ENCODE measurements at regions of chr4 and their contacts with region 1.

Region 1: DNA sequence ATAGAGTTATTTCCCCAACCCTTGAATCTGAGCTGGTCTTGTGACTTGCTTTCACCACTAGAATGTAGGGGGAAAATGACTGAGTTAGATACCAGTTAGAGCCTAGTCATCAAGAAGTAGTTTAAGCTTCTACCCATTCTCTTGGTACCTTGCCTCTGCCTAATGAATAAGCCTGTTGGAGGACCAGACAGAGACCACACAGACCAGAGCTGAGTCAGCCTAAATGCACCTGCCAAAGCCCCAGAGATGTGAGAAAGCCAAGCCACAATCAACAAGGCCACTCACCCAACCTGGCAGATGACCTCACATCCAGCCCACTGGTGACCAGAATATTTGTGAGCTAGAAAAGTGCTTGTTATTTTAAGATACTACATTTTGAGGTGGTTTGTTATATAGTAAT is 85.2 kb upstream of the DCLK2 start:
- DNase-seq: no peak
- H3K4me3 ChIP-seq: no peak overlapping the region
- H3K27ac ChIP-seq: no peak overlapping the region
- H3K27me3 ChIP-seq: no peaks in the 10 kb centered on the region
- CTCF ChIP-seq: no peak

Region 2: DNA sequence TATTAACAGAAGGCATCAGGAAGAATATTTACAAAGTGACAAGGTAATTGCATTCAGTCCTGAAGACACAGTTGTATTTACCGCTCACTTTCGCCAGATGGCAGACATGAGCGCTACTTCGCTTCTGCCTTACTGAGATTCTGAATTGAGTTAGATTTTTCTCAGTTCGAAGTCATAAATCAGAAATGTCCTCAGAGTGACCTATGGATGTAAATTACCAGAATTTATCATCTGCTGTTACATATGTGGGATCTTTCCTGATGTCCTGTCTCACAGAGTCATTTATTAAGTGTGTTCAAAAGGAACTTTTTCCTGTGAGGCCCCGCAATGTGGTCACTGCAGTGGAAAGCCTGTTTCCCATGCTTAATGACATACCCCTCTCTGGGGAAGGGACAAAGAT is 12.1 kb before region 1 on chr4:
- CTCF ChIA-PET with region 1: interaction called, 21 read pairs
- POLR2A ChIA-PET with region 1: no interaction called
- DNase-seq: no peak
- H3K4me3 ChIP-seq: no peak overlapping the region
- H3K27ac ChIP-seq: no peak overlapping the region
- H3K27me3 ChIP-seq: no peaks in the 10 kb centered on the region
- CTCF ChIP-seq: peak; percentile 87

Region 3: DNA sequence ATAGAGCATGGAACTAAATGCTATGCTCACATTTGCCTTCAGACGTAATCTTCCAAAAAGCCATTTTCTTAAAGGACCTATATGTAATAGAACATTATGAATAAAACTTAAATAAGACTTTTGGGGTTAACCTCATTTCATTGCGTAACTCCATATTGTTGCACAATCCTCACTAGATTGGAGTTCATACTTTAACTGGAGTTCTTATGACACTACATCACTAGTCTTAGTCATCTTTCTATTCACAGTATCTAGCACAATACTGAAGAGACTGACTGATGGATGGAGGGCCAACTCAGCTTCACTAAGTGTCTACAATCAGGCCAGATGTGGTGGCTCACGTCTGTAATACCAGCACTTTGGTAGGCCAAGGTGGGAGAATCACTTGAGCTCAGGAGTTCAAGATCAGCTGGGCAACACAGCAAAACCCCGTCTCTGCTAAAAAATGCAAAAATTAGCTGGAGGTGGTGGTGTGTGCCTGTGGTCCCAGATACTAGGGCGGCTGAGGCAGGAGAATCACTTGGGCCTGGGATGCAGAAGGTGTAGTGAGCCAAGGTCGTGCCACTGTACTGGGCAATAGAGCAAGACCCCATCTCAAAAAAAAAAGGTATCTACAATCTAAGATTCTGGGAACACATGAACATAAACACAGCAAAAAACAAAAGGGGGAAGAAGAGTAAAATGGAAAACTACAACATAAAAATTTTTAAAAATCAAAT is 508.1 kb after region 1 on chr4:
- CTCF ChIA-PET with region 1: no interaction called
- POLR2A ChIA-PET with region 1: no interaction called
- DNase-seq: peak; percentile 39
- H3K4me3 ChIP-seq: no peak overlapping the region
- H3K27ac ChIP-seq: peak overlapping the region; percentile 1
- H3K27me3 ChIP-seq: no peaks in the 10 kb centered on the region
- CTCF ChIP-seq: no peak

Measured in AG04450 (cell line).